Caco-2 (cell line): ENCODE measurements at regions of chr3 and their contacts with region 1.

Region 1: DNA sequence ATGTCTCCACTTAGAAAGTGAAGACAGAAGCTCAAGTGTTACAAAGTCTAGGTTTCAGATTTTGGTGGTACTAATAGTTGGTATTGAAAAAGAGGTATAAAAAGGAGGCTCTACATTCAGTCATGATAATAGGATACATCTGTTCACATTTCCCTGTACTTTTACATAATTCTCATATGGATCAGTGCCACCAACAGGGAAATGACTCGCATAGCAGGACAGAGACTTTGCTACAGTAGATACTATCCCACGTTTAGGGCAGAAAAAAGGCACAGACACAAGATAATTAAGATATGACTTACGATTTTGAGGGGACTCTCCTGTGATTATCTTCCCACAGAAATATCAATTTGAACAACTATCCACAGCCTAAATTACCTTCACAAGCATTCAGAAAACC is 1062.9 kb upstream of the EPHA6 start:
- DNase-seq: no peak
- H3K4me3 ChIP-seq: no peak overlapping the region
- H3K4me3 Mint-ChIP-seq: no peak overlapping the region
- H3K27ac Mint-ChIP-seq: no peak overlapping the region
- H3K4me1 ChIP-seq: no peaks in the 10 kb centered on the region
- H3K4me1 Mint-ChIP-seq: no peaks in the 10 kb centered on the region
- H3K27me3 ChIP-seq: no peaks in the 10 kb centered on the region
- H3K27me3 Mint-ChIP-seq: no peaks in the 10 kb centered on the region
- CTCF ChIP-seq: no peak

Region 2: GRCh38 chr3:94616821-94617220 is 1134.7 kb before region 1 on chr3:
- CTCF ChIA-PET with region 1: no interaction called
- POLR2A ChIA-PET with region 1: no interaction called
- intact Hi-C with region 1: no loop called
- DNase-seq: peak in 1 of 2 experiments; percentile 11
- H3K4me3 ChIP-seq: no peak overlapping the region
- H3K4me3 Mint-ChIP-seq: no peak overlapping the region
- H3K27ac Mint-ChIP-seq: peak overlapping the region; percentile 26
- H3K4me1 ChIP-seq: peaks cover 13% of the 10 kb centered on the region; the same call in 1 of the 2 replicates
- H3K4me1 Mint-ChIP-seq: peaks cover 16% of the 10 kb centered on the region
- H3K27me3 ChIP-seq: no peaks in the 10 kb centered on the region
- H3K27me3 Mint-ChIP-seq: no peaks in the 10 kb centered on the region
- CTCF ChIP-seq: no peak

Region 3: DNA sequence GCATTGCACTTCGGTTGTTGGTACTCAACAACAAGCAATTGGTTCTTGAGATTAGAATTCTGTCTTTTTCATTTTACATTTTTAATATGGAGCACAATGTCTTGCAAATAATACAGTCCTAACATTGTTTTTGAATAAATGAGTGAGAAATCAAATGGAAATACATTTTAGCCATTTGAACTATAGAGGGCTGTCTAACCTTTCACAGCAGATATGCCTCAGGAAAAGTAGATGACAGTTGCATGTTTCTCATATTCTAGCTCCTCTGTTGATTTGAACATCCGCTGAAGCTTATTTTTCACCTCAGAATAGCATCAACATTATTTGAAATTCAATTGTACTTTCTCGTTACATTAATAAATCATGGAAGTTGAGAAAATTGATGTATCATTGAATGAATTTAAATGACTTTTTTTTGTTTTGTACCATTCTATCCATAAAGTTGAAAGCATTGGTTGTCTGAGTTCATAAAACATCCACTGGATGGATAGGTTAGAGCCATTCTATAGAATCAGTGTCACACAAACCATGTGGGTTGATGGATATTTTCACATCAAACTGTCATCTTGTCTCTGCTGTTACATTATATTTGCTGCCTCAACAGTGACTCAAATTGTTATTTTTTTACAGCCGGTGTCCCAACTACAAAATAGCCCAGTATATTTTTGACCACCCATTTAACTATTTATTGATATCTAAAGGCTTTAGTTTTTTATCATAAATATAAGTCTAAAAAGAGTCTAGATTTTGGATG is 760.4 kb before region 1 on chr3:
- CTCF ChIA-PET with region 1: no interaction called
- POLR2A ChIA-PET with region 1: no interaction called
- intact Hi-C with region 1: loop called (anchors 2 kb)
- DNase-seq: no peak
- H3K4me3 ChIP-seq: no peak overlapping the region
- H3K4me3 Mint-ChIP-seq: no peak overlapping the region
- H3K27ac Mint-ChIP-seq: no peak overlapping the region
- H3K4me1 ChIP-seq: no peaks in the 10 kb centered on the region; the same call in 1 of the 2 replicates
- H3K4me1 Mint-ChIP-seq: no peaks in the 10 kb centered on the region
- H3K27me3 ChIP-seq: no peaks in the 10 kb centered on the region
- H3K27me3 Mint-ChIP-seq: no peaks in the 10 kb centered on the region
- CTCF ChIP-seq: no peak